Activated CD4-positive, alpha-beta memory T cell treated with anti-CD3 and anti-CD28 coated beads for 36 hours (primary cell): ENCODE measurements at regions of chr2 and their contacts with region 1.

Region 1: GRCh38 chr2:207156451-207157161 is 9.1 kb downstream of the KLF7 start:
- DNase-seq: peak; percentile 66
- H3K4me3 Mint-ChIP-seq: no peak overlapping the region
- H3K27ac Mint-ChIP-seq: peak overlapping the region; percentile 46
- H3K4me1 Mint-ChIP-seq: peaks cover 89% of the 10 kb centered on the region
- H3K27me3 Mint-ChIP-seq: no peaks in the 10 kb centered on the region

Region 2: DNA sequence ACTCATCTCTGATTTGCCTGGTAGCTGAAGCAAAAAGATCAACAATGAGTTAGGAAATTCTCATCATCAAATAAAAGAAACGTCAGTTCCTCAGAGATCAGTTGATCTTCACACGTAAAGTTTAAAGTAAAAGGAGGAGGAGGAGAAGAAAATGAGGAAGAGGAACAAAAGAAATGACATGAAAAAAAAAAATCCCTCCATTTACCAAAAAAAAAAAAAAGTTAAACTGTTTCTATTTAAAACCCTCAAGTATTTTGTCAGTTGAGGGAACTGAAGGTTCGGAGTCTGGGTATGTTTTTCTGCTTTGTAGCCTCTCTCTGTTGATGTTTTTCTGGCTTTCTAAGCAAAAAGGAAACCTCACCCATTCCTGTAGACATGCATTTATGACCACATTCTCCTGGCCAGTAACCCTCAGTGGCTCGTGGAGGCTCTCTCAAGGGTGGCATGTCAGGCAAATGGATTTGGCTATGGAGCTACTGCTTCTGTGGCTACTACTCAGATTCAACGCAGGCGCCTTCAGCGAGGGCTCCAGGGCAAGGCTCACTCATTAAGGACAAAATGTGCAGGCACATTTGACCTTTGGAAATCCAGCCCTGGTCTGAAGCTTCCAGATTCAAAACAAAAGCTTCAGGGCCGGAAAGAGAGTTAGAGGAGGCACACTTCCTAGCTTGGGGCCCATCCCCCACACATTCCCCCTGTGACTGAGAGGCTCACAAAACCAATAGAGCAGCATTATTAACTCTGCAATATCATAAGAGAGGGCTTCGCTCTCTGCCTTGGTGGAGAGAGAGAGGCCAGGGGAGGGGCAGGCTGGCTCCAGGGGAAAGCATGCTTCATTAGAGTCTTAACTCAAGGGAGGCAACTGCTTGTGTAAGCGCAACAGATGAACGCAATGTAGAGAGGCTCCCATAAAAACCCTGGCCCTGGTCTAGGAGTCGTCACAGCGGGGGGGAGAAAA is 13.1 kb before region 1 on chr2:
- CTCF ChIA-PET with region 1: interaction called, 4 read pairs
- POLR2A ChIA-PET with region 1: interaction called, 8 read pairs
- intact Hi-C with region 1: loop called (anchors 1 kb)
- DNase-seq: peak; percentile 56
- H3K4me3 Mint-ChIP-seq: peak overlapping the region; percentile 48
- H3K27ac Mint-ChIP-seq: peak overlapping the region; percentile 79
- H3K4me1 Mint-ChIP-seq: peaks cover 71% of the 10 kb centered on the region
- H3K27me3 Mint-ChIP-seq: no peaks in the 10 kb centered on the region